Gastrocnemius medialis (tissue), 4 donors: ENCODE measurements at regions of chr7 and their contacts with region 1.

Region 1: DNA sequence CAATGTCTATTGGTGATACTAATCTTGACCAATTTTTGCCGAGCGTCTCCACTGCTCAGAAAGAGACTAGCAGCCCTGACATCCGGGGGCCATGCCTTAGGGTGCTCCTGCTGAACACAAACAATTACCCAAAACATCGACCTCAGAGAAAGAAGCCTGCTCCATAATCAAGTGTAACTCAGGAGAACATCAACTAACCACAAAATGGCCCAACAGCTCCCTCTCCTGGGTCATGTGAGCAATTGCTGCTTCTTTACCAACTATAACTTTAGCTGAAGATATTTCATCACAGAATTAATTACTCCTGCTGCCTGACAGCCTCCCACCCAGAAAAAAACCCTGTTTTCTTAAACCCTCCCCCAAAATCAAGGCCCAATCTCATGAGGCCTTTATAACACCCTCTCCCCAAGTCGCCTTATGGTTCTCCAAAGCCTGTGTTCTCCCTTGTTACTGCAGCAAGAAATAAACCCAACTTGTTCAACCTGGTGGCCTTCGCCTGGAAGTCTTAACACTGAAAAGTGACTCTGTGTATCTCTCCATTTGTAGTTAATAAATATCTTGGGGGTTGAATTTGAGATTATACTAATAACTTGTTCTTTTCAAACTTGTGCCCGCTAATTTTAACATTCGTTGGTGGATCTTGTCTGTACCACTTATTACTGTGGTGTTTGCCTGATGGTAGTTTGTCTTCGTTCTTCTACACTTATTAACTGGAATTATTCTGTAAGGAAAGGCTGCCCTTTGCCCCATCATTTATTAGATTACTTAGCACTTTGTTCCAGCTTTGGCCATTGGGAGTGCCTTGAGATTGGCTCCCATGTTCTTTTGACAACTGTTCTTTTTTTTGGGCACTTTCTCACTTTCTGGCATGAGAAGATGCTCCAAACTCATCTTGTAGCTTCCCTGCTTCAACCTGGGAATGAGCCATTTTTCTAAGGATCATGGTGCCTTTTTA is 21.2 kb upstream of the RAMP3 start:
- DNase-seq: peak; percentile 26 to 34
- ATAC-seq: peak; percentile 86 to 96
- H3K4me3 ChIP-seq: no peak overlapping the region
- H3K27ac ChIP-seq: no peak overlapping the region
- H3K4me1 ChIP-seq: no peaks in the 10 kb centered on the region
- H3K27me3 ChIP-seq: no peaks in the 10 kb centered on the region
- CTCF ChIP-seq: peak; percentile 70 to 84 (median 79)
- POLR2A ChIP-seq: no peak

Region 2: DNA sequence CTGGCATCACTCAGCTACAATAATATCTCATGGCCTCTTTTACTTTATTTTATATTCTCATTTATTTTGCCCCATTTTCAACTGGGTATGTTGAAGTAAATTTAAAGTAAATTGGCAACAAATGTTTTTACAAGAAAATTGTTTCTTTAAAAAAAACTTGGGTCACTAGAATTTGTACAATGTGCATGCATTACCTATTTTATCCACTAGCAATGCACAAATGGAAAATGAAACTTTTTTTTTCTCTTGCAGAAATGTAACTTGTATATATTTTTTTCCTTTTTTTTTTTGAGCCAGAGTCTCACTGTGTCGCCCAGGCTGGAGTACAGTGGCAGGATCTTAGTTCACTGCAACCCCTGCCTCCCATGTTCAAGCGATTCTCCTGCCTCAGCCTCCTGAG is 278.2 kb before region 1 on chr7:
- in situ Hi-C with region 1: loop called in 3 of 4 experiments (anchors 10 to 25 kb)
- intact Hi-C with region 1: loop called (anchors 1 kb)
- DNase-seq: no peak
- ATAC-seq: no peak
- H3K4me3 ChIP-seq: no peak overlapping the region
- H3K27ac ChIP-seq: no peak overlapping the region
- H3K4me1 ChIP-seq: no peaks in the 10 kb centered on the region
- H3K27me3 ChIP-seq: no peaks in the 10 kb centered on the region
- CTCF ChIP-seq: no peak
- POLR2A ChIP-seq: no peak

Region 3: GRCh38 chr7:44867073-44867995 is 269.0 kb before region 1 on chr7:
- in situ Hi-C with region 1: loop called in 1 of 4 experiments (anchors 25 kb)
- intact Hi-C with region 1: no loop called
- DNase-seq: peak; percentile 71 to 80
- ATAC-seq: peak; percentile 100
- H3K4me3 ChIP-seq: no peak overlapping the region
- H3K27ac ChIP-seq: peak overlapping the region; percentile 78 to 87 (median 82)
- H3K4me1 ChIP-seq: peaks cover 14 to 17% of the 10 kb centered on the region in 2 donors
- H3K27me3 ChIP-seq: no peaks in the 10 kb centered on the region
- CTCF ChIP-seq: no peak
- POLR2A ChIP-seq: no peak

Region 4: GRCh38 chr7:44973610-44974401 is 162.6 kb before region 1 on chr7:
- in situ Hi-C with region 1: no loop called
- intact Hi-C with region 1: loop called (anchors 2 kb)
- DNase-seq: peak in 1 of 2 donors; percentile 44
- ATAC-seq: peak; percentile 54 to 61
- H3K4me3 ChIP-seq: no peak overlapping the region
- H3K27ac ChIP-seq: no peak overlapping the region
- H3K4me1 ChIP-seq: no peaks in the 10 kb centered on the region
- H3K27me3 ChIP-seq: no peaks in the 10 kb centered on the region
- CTCF ChIP-seq: peak; percentile 25 to 59 (median 50)
- POLR2A ChIP-seq: no peak